PC-9 (cell line): ENCODE measurements at regions of chr13 and their contacts with region 1.

Region 1: GRCh38 chr13:106567474-106568298 is at the start of gene ARGLU1:
- DNase-seq: peak; percentile 85 to 93
- H3K4me3 ChIP-seq: peak within 1 kb of the TSS; percentile 69
- H3K27ac ChIP-seq: peak within 1 kb of the TSS; percentile 60
- H3K4me1 ChIP-seq: peaks cover 31% of the 10 kb centered on the region
- H3K27me3 ChIP-seq: no peaks in the 10 kb centered on the region
- CTCF ChIP-seq: no peak
- total RNA-seq, gene ARGLU1: 89.2 and 90.8 TPM in 2 replicates

Region 2: GRCh38 chr13:106143930-106144709 is 423.6 kb before region 1 on chr13:
- CTCF ChIA-PET with region 1: no interaction called
- POLR2A ChIA-PET with region 1: interaction called, 17 read pairs
- intact Hi-C with region 1: no loop called
- DNase-seq: peak; percentile 44 to 99
- H3K4me3 ChIP-seq: no peak overlapping the region
- H3K27ac ChIP-seq: peak overlapping the region; percentile 85
- H3K4me1 ChIP-seq: peaks cover 28% of the 10 kb centered on the region
- H3K27me3 ChIP-seq: no peaks in the 10 kb centered on the region
- CTCF ChIP-seq: no peak

Region 3: GRCh38 chr13:106532111-106532929 is 35.4 kb before region 1 on chr13:
- CTCF ChIA-PET with region 1: no interaction called
- POLR2A ChIA-PET with region 1: no interaction called
- intact Hi-C with region 1: no loop called
- DNase-seq: peak in 1 of 2 experiments; percentile 25
- H3K4me3 ChIP-seq: peak overlapping the region; percentile 72
- H3K27ac ChIP-seq: peak overlapping the region; percentile 83
- H3K4me1 ChIP-seq: peaks cover 40% of the 10 kb centered on the region
- H3K27me3 ChIP-seq: no peaks in the 10 kb centered on the region
- CTCF ChIP-seq: no peak

Region 4: GRCh38 chr13:106762708-106763107 is 195.0 kb after region 1 on chr13:
- CTCF ChIA-PET with region 1: interaction called, 3 read pairs
- POLR2A ChIA-PET with region 1: no interaction called
- intact Hi-C with region 1: loop called (anchors 10 kb)
- DNase-seq: no peak
- H3K4me3 ChIP-seq: no peak overlapping the region
- H3K27ac ChIP-seq: no peak overlapping the region
- H3K4me1 ChIP-seq: no peaks in the 10 kb centered on the region
- H3K27me3 ChIP-seq: no peaks in the 10 kb centered on the region
- CTCF ChIP-seq: no peak

Region 5: DNA sequence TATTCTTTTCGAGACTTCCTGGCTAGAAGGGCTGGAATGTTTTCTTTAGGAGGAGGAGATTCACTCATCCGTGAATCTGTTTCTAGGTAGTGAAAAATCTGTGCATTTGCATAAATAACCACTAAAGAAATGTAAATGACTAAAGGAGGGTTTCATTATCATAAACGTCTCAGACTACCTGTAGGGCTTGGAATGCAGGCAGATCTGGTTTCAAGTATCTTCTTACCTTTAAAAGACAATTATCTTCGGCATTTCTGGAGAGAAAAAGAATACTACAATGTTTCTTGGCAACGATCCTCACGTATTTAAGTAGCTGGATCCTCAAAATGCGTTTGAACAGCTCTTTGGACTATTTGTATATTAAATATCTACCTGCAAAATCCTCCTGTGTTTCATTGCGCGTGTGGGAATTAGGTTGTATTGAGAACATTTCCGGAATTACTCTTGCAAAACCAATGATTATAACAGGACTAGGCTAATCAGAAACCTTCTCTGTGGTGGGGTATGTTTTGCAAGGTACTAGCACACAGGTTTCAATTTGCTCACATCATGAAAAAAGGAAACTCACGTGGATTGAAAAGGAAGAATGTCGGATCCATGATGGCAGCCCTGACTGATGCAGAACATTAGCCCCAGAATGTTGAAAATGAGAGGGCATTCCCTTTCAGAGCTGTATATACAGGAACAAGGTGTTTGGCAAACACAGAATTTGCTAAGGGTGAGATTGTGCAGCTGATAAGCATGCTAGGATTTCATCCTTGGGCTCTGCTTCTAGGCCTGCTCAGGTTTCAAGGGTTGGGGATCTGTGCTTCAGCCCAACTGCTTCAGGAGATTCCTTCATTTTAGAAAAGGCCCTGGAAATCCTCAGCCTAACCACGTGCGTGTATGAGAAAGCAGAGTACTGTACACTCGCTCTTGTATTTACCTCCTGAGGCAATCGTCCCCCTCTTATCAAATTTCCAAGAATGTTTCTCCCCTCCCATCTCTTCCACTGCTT is 291.5 kb after region 1 on chr13:
- CTCF ChIA-PET with region 1: no interaction called
- POLR2A ChIA-PET with region 1: no interaction called
- intact Hi-C with region 1: loop called (anchors 2 kb)
- DNase-seq: peak; percentile 68 to 96
- H3K4me3 ChIP-seq: peak overlapping the region; percentile 50
- H3K27ac ChIP-seq: peak overlapping the region; percentile 92
- H3K4me1 ChIP-seq: peaks cover 58% of the 10 kb centered on the region
- H3K27me3 ChIP-seq: no peaks in the 10 kb centered on the region
- CTCF ChIP-seq: no peak

Region 6: GRCh38 chr13:106911627-106912026 is 343.9 kb after region 1 on chr13:
- CTCF ChIA-PET with region 1: no interaction called
- POLR2A ChIA-PET with region 1: interaction called, 11 read pairs
- intact Hi-C with region 1: no loop called
- DNase-seq: peak in 1 of 2 experiments; percentile 59
- H3K4me3 ChIP-seq: no peak overlapping the region
- H3K27ac ChIP-seq: no peak overlapping the region
- H3K4me1 ChIP-seq: peaks cover 13% of the 10 kb centered on the region
- H3K27me3 ChIP-seq: no peaks in the 10 kb centered on the region
- CTCF ChIP-seq: no peak

Region 7: DNA sequence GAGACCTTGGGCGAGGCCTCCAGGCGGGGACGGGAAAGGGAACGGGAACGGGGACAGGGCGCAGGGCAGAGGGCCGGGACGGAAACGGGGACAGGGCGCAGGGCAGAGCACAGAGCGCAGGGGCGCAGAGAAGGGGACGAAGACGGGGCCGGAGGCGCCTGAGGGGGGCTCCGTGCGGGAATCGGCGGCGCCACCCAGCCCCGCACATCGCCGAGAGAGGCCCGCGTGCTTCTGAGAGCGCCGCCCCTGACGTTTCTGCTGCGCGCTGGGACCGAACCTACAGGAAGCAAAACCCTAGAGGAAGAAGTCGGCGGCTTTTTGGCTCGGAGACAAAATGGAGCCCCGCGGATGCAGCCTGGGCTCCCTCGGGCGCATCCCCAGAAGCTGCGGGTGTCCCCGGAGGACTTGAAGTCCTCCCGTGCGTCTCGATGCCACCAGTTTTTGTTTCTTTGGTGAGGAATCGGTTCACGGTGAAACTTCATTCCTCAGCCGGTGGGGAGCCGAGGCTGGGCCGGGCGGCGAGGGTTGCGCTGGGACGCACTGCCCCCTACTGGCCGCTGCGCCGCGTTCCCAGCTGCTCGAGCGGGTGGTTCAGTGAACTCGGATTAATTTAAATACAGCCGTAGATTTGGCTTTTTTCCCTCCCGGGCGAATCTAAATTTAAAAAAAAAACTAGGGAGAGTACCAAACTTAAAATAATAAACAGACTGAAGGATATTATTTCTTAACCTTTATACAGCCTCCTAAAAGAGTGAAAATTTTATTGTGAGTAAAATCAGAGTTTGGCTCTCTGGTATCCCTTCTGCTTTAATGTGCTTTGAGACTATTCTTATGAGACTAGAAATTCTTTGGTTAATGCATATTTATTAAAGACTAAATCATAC is 350.2 kb after region 1 on chr13:
- CTCF ChIA-PET with region 1: no interaction called
- POLR2A ChIA-PET with region 1: no interaction called
- intact Hi-C with region 1: loop called (anchors 1 kb)
- DNase-seq: peak; percentile 59 to 85
- H3K4me3 ChIP-seq: peak overlapping the region; percentile 76
- H3K27ac ChIP-seq: peak overlapping the region; percentile 60
- H3K4me1 ChIP-seq: peaks cover 14% of the 10 kb centered on the region
- H3K27me3 ChIP-seq: no peaks in the 10 kb centered on the region
- CTCF ChIP-seq: peak; percentile 97